Psoas muscle (tissue), 8 donors: ENCODE measurements at regions of chr13 and their contacts with region 1.

Region 1: DNA sequence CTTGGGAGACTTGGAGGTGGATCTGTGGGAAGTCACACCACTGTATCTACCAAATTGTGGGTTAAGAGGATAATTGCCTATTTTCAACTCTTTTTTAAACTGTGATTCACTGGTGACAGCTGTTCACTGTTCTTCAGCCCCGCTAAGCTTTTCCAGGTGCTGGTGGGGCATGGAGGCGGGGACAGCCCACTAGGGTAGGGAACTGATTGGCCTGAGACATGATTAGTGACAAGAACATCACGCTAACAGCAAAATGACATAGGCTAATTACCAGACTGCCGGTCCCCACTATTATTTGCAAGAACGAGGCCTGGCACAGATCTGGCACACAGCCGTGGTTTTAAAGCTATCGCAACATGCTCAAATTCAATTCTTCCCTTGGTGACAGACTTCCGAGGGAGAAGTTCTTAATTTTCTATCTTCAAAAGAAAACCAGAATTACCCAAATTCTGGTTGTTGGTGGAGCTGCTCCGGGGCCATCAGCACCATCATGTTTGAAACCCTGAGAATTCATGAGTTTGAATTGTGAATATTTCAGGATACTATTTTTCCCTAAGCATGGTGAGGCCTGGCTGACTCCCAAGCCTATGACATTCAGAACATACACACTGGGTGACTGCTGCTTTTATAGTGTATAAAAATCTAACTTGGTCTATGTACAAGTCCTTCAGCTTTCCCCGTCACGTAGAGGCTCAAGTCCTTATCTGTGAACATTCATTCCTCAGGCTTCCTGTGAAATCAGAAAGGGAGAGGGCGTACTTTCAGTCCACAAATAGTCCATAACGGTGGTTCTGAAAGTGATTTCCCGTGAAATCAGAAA is 17.9 kb downstream of the DOCK9 start:
- DNase-seq: no peak
- ATAC-seq: peak in 2 of 4 donors; percentile 28 to 46
- H3K4me3 ChIP-seq: no peak overlapping the region
- H3K27ac ChIP-seq: peak overlapping the region; percentile 57
- H3K4me1 ChIP-seq: no peaks in the 10 kb centered on the region
- H3K27me3 ChIP-seq: no peaks in the 10 kb centered on the region
- CTCF ChIP-seq: no peak

Region 2: DNA sequence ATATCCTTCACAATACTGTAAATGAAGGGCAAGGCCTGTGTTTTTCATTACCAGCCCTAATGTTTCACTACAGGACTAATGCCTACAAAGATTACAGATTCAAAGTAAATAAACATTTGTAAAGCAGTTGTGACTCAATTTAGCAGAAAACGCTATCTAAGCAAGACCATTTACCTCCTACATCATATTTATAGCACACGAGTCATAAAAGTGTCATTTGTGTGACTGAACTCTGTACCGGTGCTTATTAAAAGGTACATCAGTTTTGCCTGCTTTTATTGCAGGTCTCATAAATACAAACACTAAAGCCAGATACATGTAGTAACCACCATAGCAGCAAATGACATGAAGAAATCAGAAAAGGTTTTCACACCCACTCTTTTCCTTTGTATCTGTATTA is 146.0 kb before region 1 on chr13:
- intact Hi-C with region 1: no loop called
- DNase-seq: no peak
- ATAC-seq: no peak
- H3K4me3 ChIP-seq: no peak overlapping the region
- H3K27ac ChIP-seq: no peak overlapping the region
- H3K4me1 ChIP-seq: no peaks in the 10 kb centered on the region
- H3K27me3 ChIP-seq: no peaks in the 10 kb centered on the region
- CTCF ChIP-seq: no peak

Region 3: GRCh38 chr13:98927951-98928927 is 31.8 kb before region 1 on chr13:
- intact Hi-C with region 1: loop called in 1 of 2 experiments (anchors 1 kb)
- DNase-seq: no peak
- ATAC-seq: peak in 2 of 4 donors; percentile 47 to 76
- H3K4me3 ChIP-seq: no peak overlapping the region
- H3K27ac ChIP-seq: peak overlapping the region; percentile 27
- H3K4me1 ChIP-seq: peaks cover 4% of the 10 kb centered on the region
- H3K27me3 ChIP-seq: peaks cover 0 to 2% (median 0%) of the 10 kb centered on the region in 3 donors
- CTCF ChIP-seq: no peak

Region 4: GRCh38 chr13:99432609-99433542 is 472.9 kb after region 1 on chr13:
- intact Hi-C with region 1: no loop called
- DNase-seq: peak; percentile 73 to 83
- ATAC-seq: peak; percentile 48 to 72 (median 69)
- H3K4me3 ChIP-seq: peak overlapping the region; percentile 37
- H3K27ac ChIP-seq: no peak overlapping the region
- H3K4me1 ChIP-seq: no peaks in the 10 kb centered on the region
- H3K27me3 ChIP-seq: peaks cover 0 to 2% (median 0%) of the 10 kb centered on the region in 3 donors
- CTCF ChIP-seq: no peak